ENCODE measurements at regions of chr5 and their contacts with region 1.

Region 1: GRCh38 chr5:32504989-32505596 is 60.6 kb upstream of the ZFR start:
- DNase-seq: peak; percentile 94
- H3K4me3 ChIP-seq: peak overlapping the region in 2 of 4 donors; percentile 0 to 23
- H3K27ac ChIP-seq: peak overlapping the region; percentile 50 to 79 (median 67)
- H3K4me1 ChIP-seq: peaks cover 23 to 37% (median 36%) of the 10 kb centered on the region in 4 donors
- H3K27me3 ChIP-seq: no peaks in the 10 kb centered on the region
- CTCF ChIP-seq: no peak
- EP300 ChIP-seq: no peak
- POLR2A ChIP-seq: no peak

Region 2: GRCh38 chr5:32027717-32028321 is 477.3 kb before region 1 on chr5:
- intact Hi-C with region 1: no loop called
- DNase-seq: no peak
- H3K4me3 ChIP-seq: peak overlapping the region; percentile 9 to 19 (median 14)
- H3K27ac ChIP-seq: peak overlapping the region; percentile 56 to 73 (median 69)
- H3K4me1 ChIP-seq: peaks cover 51 to 62% (median 57%) of the 10 kb centered on the region in 4 donors
- H3K27me3 ChIP-seq: no peaks in the 10 kb centered on the region
- CTCF ChIP-seq: no peak
- EP300 ChIP-seq: no peak
- POLR2A ChIP-seq: no peak

Region 3: GRCh38 chr5:32585446-32586275 is 80.6 kb after region 1 on chr5 and contains the start of gene SUB1:
- intact Hi-C with region 1: loop called (anchors 5 kb)
- DNase-seq: peak; percentile 97
- H3K4me3 ChIP-seq: peak within 1 kb of the TSS; percentile 88 to 99 (median 90)
- H3K27ac ChIP-seq: peak within 1 kb of the TSS; percentile 95 to 100 (median 98)
- H3K4me1 ChIP-seq: peaks cover 14 to 42% (median 30%) of the 10 kb centered on the region in 4 donors
- H3K27me3 ChIP-seq: no peaks in the 10 kb centered on the region
- CTCF ChIP-seq: no peak
- EP300 ChIP-seq: no peak
- POLR2A ChIP-seq: peak; percentile 67
- total RNA-seq, gene SUB1: 66.4 to 154 (median 90.1) TPM

Region 4: DNA sequence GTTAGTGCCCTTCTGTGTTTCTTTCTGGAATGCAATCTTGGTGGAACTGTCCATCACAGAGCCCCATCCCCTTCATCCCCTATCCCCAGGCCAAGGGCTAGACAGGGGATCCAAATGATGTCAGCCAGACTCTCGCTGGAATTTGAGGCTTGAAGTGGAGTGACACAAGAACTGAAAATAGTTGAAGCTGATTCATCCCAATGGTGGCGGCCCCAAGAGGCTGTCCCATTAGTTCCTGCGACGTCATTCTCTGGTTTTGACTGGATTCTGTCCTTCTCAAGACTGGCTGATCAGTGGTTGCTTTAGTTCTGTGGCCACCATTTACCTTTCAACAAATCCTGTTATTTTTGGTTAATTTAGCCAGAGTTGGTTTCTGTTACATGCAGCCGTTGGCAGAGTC is 140.2 kb after region 1 on chr5:
- intact Hi-C with region 1: no loop called
- DNase-seq: no peak
- H3K4me3 ChIP-seq: no peak overlapping the region
- H3K27ac ChIP-seq: no peak overlapping the region
- H3K4me1 ChIP-seq: no peaks in the 10 kb centered on the region
- H3K27me3 ChIP-seq: no peaks in the 10 kb centered on the region
- CTCF ChIP-seq: no peak
- EP300 ChIP-seq: no peak
- POLR2A ChIP-seq: no peak

Region 5: DNA sequence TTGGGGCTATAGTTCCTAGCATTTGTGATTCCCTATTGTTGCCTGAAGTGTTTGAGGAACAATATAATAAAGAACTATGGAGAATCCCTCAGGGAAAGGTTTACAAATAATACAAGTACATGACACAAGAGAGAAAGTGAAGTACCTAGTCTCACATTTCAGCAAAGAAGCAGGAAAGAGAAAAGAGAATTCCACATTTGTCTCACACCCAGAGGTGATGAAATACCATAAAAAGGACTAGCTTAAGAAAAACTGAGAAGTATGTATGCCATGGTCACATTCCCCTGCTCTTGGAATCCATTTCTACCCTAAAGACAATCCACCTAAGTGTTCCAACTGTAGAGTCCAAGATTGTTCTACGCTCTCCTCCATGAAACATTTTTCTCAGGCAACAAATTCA is 856.7 kb after region 1 on chr5:
- intact Hi-C with region 1: no loop called
- DNase-seq: no peak
- H3K4me3 ChIP-seq: no peak overlapping the region
- H3K27ac ChIP-seq: no peak overlapping the region
- H3K4me1 ChIP-seq: peaks cover 4 to 14% (median 6%) of the 10 kb centered on the region in 4 donors
- H3K27me3 ChIP-seq: no peaks in the 10 kb centered on the region
- CTCF ChIP-seq: no peak
- EP300 ChIP-seq: no peak
- POLR2A ChIP-seq: no peak

Measured in esophagus muscularis mucosa (tissue), 4 donors.